Heart right ventricle (tissue), 16 donors: ENCODE measurements at regions of chr6 and their contacts with region 1.

Region 1: GRCh38 chr6:55445648-55446204 is 118.5 kb downstream of the GFRAL start:
- DNase-seq: no peak
- ATAC-seq: no peak
- H3K4me3 ChIP-seq: no peak overlapping the region
- H3K27ac ChIP-seq: no peak overlapping the region
- H3K4me1 ChIP-seq: peaks cover 0 to 8% (median 0%) of the 10 kb centered on the region in 9 donors
- H3K27me3 ChIP-seq: no peaks in the 10 kb centered on the region
- CTCF ChIP-seq: peak in 8 of 9 donors; percentile 36 to 67 (median 55)

Region 2: GRCh38 chr6:55276745-55277530 is 168.8 kb before region 1 on chr6:
- intact Hi-C with region 1: loop called in 1 of 10 experiments (anchors 10 kb)
- DNase-seq: peak; percentile 39 to 45
- ATAC-seq: peak in 7 of 8 donors; percentile 48 to 82 (median 79)
- H3K4me3 ChIP-seq: peak overlapping the region in 7 of 10 donors; percentile 3 to 33 (median 23)
- H3K27ac ChIP-seq: peak overlapping the region in 7 of 10 donors; percentile 4 to 62 (median 54)
- H3K4me1 ChIP-seq: peaks cover 0 to 12% (median 0%) of the 10 kb centered on the region in 9 donors
- H3K27me3 ChIP-seq: no peaks in the 10 kb centered on the region
- CTCF ChIP-seq: peak; percentile 15 to 71 (median 58)

Region 3: GRCh38 chr6:55568808-55569439 is 123.2 kb after region 1 on chr6:
- intact Hi-C with region 1: loop called in 2 of 10 experiments (anchors 10 kb)
- DNase-seq: peak in 1 of 2 donors; percentile 40
- ATAC-seq: peak; percentile 69 to 97 (median 94)
- H3K4me3 ChIP-seq: no peak overlapping the region
- H3K27ac ChIP-seq: peak overlapping the region; percentile 3 to 68 (median 52)
- H3K4me1 ChIP-seq: peaks cover 0 to 23% (median 0%) of the 10 kb centered on the region in 9 donors
- H3K27me3 ChIP-seq: no peaks in the 10 kb centered on the region
- CTCF ChIP-seq: no peak

Region 4: DNA sequence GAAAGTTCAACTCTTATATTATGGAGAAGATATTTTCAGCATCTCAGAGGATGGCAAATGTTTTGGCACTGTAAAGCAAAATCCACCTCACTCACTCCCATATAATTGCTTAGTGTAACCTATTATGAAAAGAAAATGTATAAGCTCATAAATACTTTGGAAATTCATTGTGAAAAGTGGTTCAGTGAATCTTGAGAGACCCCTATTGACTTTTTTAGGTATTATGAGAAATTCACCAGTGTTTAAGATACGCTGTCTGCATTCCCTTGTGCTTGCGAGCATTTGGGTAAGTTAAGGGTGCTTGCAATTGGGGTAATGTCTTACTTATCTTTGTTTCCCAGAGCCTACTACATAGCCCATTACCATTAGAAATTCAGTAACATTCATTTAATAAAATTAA is 496.0 kb after region 1 on chr6:
- intact Hi-C with region 1: loop called in 1 of 10 experiments (anchors 5 kb)
- DNase-seq: no peak
- ATAC-seq: no peak
- H3K4me3 ChIP-seq: no peak overlapping the region
- H3K27ac ChIP-seq: no peak overlapping the region
- H3K4me1 ChIP-seq: no peaks in the 10 kb centered on the region
- H3K27me3 ChIP-seq: no peaks in the 10 kb centered on the region
- CTCF ChIP-seq: peak in 5 of 9 donors; percentile 14 to 42 (median 21)